ENCODE measurements at regions of chr1 and their contacts with region 1.

Region 1: GRCh38 chr1:210448297-210448892 is 119.7 kb downstream of the HHAT start:
- DNase-seq: peak; percentile 53
- H3K4me3 Mint-ChIP-seq: no peak overlapping the region
- H3K27ac Mint-ChIP-seq: no peak overlapping the region
- H3K4me1 Mint-ChIP-seq: peaks cover 10% of the 10 kb centered on the region
- H3K27me3 Mint-ChIP-seq: peaks cover 28% of the 10 kb centered on the region
- CTCF ChIP-seq: peak; percentile 58

Region 2: GRCh38 chr1:210407207-210407886 is 41.0 kb before region 1 on chr1:
- CTCF ChIA-PET with region 1: no interaction called
- intact Hi-C with region 1: loop called (anchors 2 kb)
- DNase-seq: peak; percentile 70
- H3K4me3 Mint-ChIP-seq: no peak overlapping the region
- H3K27ac Mint-ChIP-seq: no peak overlapping the region
- H3K4me1 Mint-ChIP-seq: no peaks in the 10 kb centered on the region
- H3K27me3 Mint-ChIP-seq: no peaks in the 10 kb centered on the region
- CTCF ChIP-seq: peak; percentile 64

Region 3: GRCh38 chr1:210584439-210585113 is 136.2 kb after region 1 on chr1:
- CTCF ChIA-PET with region 1: interaction called, 4 read pairs
- intact Hi-C with region 1: loop called (anchors 2 kb)
- DNase-seq: peak; percentile 92
- H3K4me3 Mint-ChIP-seq: no peak overlapping the region
- H3K27ac Mint-ChIP-seq: no peak overlapping the region
- H3K4me1 Mint-ChIP-seq: no peaks in the 10 kb centered on the region
- H3K27me3 Mint-ChIP-seq: no peaks in the 10 kb centered on the region
- CTCF ChIP-seq: peak; percentile 70

Region 4: DNA sequence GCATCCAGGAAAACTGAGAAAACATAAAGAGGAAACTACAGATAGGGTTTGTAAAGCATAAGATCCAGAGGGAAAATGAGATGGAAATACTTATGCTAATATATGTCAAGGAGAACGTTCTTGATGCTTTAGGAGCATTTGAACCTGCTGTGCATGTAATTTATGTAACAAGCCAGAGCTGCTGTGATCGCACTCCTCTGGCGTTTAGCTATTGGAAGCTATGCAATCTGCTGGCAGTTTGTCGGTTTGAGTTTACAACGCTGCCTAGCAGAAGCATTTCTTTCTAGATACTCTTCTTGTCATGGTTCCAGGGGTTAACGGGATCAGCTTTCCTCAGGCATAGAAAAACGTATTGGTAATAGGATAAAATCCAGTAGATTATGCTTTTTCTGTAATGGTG is 502.9 kb after region 1 on chr1:
- CTCF ChIA-PET with region 1: no interaction called
- intact Hi-C with region 1: loop called (anchors 5 kb)
- DNase-seq: no peak
- H3K4me3 Mint-ChIP-seq: no peak overlapping the region
- H3K27ac Mint-ChIP-seq: no peak overlapping the region
- H3K4me1 Mint-ChIP-seq: no peaks in the 10 kb centered on the region
- H3K27me3 Mint-ChIP-seq: no peaks in the 10 kb centered on the region
- CTCF ChIP-seq: peak; percentile 15

Region 5: DNA sequence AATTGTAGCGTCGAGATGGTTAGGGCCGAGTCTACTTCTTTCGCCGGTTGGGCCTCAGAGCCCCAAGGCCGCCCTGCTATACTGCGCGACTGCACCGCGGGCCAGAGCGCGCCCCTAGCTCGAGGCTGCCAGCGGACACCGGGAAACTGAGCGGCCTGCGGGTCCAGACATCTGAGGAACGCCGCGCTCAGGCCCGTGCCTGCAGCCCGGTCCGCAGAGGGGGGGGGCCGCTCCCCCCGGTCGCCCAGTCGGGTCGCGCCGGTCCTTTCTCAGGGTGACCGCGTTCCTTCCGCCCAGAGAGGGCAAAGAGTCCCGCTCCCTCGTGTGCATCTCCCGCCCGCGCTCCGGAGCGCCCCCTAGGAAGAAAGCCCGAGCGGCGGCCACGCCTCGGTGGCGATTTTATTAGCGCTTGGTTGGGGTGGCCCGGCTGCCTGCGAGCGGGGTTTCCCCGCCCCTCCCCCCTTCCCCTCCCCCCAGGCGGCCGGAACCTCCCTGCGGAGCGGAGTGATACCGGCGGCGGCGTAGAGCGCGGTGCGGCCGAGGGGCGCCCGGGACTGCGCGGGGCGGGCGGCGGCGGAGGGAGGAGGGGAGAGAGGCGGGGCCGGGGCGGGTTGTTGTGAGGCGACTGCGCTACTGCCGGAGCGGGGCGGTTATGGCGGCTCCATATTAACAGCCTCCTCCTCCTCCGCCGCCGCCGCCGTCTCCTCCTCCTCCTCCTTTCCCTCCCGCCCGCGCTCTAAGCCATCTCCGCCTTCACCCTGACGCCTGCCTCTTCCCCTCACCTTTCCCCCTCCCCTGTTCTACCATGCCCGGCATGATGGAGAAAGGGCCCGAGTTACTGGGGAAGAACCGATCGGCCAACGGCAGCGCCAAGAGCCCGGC is 810.6 kb after region 1 on chr1 and contains the start of gene RCOR3:
- CTCF ChIA-PET with region 1: no interaction called
- intact Hi-C with region 1: loop called (anchors 10 kb)
- DNase-seq: peak; percentile 96
- H3K4me3 Mint-ChIP-seq: peak within 1 kb of the TSS; percentile 70
- H3K27ac Mint-ChIP-seq: peak within 1 kb of the TSS; percentile 62
- H3K4me1 Mint-ChIP-seq: peaks cover 18% of the 10 kb centered on the region
- H3K27me3 Mint-ChIP-seq: no peaks in the 10 kb centered on the region
- CTCF ChIP-seq: peak; percentile 80
- total RNA-seq, gene RCOR3: 48.0 and 54.1 TPM in 2 replicates

Measured in Calu3 (cell line).